Mammary epithelial cell (primary cell): ENCODE measurements at regions of chr14 and their contacts with region 1.

Region 1: DNA sequence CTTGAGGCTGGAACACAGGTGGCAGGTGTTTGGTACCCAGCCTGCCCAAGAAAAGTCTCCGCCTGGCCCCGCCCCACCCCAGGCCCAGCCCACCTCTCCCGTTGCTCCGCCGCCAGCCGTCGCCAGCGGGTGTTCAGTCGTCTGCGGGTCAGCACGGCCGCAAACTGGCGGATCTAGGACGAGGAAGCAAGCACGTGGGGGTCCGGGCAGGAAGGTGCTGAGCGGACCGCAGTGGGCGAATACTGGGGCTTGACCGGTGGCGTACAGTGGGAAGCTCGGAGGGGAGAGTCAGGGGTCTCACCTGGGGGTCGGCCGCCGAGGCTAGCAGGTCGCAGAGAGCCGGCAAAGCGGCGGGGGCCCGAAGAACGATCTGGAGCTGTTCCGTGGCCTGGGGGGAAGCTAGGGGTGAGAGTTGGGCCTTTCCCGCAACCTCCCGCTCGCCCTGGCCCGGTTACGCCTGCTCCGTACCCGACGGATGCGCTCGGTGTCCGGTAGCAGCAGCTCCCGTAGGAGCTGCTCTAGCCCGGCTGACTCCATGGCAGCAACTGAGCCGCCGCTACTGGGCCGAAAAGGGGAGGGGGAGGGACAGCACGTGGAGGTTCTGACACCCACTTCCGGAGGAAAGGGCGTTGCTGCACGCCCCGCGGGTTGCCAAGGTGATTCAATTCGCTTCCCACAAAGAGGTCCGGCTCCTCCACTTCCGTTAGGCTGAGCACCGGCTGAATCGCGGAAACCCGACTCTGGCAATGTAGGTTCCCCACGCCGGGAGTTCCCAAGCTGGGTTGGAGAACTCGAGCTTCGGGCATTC is at the start of gene IPO4:
- DNase-seq: peak; percentile 94
- H3K4me3 ChIP-seq: peak within 1 kb of the TSS; percentile 87 to 95 (median 89)
- H3K27ac ChIP-seq: peak within 1 kb of the TSS; percentile 63
- H3K4me1 ChIP-seq: peaks cover 14% of the 10 kb centered on the region
- H3K27me3 ChIP-seq: no peaks in the 10 kb centered on the region
- CTCF ChIP-seq: no peak
- total RNA-seq, gene IPO4: 44.2 to 60.2 TPM

Region 2: GRCh38 chr14:23578560-23579310 is 609.7 kb before region 1 on chr14 and contains the start of gene JPH4:
- CTCF ChIA-PET with region 1: no interaction called
- dilution Hi-C with region 1: no loop called
- in situ Hi-C with region 1: no loop called
- intact Hi-C with region 1: no loop called
- DNase-seq: no peak
- H3K4me3 ChIP-seq: no peak within 1 kb of the TSS
- H3K27ac ChIP-seq: no peak within 1 kb of the TSS
- H3K4me1 ChIP-seq: peaks cover 3% of the 10 kb centered on the region
- H3K27me3 ChIP-seq: peaks cover 32% of the 10 kb centered on the region
- CTCF ChIP-seq: no peak
- total RNA-seq, gene JPH4: 0.16 TPM in 1 of 2 donors, not detected in the other

Region 3: DNA sequence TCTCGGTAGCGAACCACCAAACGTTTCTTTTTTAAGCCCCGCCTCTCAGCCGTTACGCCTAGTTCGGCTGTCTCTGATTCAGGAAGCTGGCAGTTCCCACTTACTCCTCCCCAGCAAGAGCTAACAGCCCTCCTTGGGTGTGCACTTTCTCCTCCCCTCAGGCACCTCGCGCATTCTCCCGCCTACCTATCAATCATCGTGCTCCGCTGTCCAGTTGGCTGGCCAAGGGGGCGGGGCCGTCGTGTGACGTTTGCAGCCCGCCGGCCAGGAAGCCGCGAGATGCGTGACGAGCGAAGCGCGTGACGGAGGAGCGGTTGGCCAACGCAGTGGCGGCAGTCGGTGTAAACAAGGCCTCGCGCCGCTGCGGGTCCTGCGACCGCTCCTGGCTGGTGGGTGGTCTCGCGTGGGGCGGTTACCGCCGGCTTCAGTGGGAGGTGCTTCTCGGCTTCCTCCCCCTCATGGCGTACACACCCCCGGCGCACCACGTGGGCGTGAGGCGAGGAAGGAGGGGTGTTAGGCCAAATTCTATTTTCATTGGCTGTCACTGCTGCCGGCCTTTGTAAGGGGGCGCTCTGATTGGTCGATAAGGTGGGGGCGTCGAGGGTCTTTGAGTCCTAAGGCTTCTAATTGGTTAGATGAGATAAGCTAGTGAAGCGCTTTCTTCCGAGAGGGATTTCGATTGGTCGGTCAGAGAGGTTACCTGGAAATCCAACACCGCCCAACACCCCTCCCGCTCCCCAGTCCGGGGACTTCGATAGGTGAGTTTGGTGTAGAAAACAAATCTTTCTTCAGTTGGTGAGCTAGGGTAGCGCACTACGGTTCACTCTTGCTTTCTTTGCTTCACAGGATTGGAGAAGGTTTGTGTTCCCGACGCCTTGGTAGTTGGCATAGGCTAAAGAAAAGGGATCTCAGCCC is 73.7 kb before region 1 on chr14 and contains the starts of genes DCAF11 and NRL:
- CTCF ChIA-PET with region 1: no interaction called
- dilution Hi-C with region 1: no loop called
- in situ Hi-C with region 1: no loop called
- intact Hi-C with region 1: loop called (anchors 2 kb)
- DNase-seq: peak; percentile 100
- H3K4me3 ChIP-seq: peak within 1 kb of the TSS; percentile 63 to 96 (median 74)
- H3K27ac ChIP-seq: peak within 1 kb of the TSS; percentile 91
- H3K4me1 ChIP-seq: peaks cover 16% of the 10 kb centered on the region
- H3K27me3 ChIP-seq: no peaks in the 10 kb centered on the region
- CTCF ChIP-seq: no peak
- total RNA-seq, gene DCAF11: 38.4 to 55.7 TPM
- total RNA-seq, gene NRL: 1.1 to 1.5 TPM

Region 4: DNA sequence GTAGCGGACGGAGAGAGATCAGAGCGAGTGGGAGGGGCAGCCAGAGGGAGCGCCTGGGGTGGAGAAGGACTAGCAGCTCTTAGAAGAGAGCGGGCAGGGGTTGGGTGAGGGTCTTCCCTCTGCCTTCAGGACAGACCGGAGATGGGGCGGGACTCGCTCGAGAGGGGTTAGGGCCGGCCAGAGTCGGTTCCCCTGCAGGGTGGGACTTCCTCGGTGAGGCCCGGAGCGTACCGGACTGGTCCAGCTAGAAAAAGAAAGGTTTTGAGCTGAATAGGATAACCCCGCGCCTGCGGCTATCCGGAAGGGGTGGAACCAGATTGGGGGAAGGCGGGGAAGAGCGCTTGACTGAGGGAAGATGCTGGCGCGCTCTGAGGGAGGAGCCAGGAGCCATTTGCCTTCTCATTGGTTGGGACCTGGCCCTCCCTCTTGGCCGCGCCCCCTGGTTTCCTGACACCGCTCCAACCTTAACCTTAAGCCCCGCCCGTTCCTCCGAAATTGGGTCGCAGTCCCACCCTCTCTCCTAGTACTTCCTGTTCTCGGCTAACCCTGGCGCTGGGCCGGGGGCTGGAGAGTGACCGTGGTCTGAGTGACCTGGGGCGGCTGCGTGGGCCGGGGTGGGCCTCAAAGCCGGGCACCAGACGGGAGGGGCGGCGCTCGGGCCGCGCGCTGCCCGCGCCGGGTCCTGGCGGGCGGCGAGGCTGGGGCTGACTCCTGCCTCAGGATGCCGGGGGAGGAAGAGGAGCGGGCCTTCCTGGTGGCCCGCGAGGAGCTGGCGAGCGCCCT is 41.3 kb before region 1 on chr14 and contains the start of gene RNF31:
- CTCF ChIA-PET with region 1: no interaction called
- dilution Hi-C with region 1: no loop called
- in situ Hi-C with region 1: no loop called
- intact Hi-C with region 1: loop called (anchors 1 kb)
- DNase-seq: peak; percentile 98
- H3K4me3 ChIP-seq: peak within 1 kb of the TSS; percentile 75 to 93 (median 90)
- H3K27ac ChIP-seq: peak within 1 kb of the TSS; percentile 80
- H3K4me1 ChIP-seq: peaks cover 15% of the 10 kb centered on the region
- H3K27me3 ChIP-seq: no peaks in the 10 kb centered on the region
- CTCF ChIP-seq: no peak
- total RNA-seq, gene RNF31: 35.3 to 52.1 TPM

Region 5: GRCh38 chr14:24160850-24161804 is 27.3 kb before region 1 on chr14 and contains the start of gene IRF9:
- CTCF ChIA-PET with region 1: interaction called, 6 read pairs
- dilution Hi-C with region 1: no loop called
- in situ Hi-C with region 1: no loop called
- intact Hi-C with region 1: loop called (anchors 1 kb)
- DNase-seq: peak; percentile 83
- H3K4me3 ChIP-seq: peak within 1 kb of the TSS; percentile 58 to 67 (median 58)
- H3K27ac ChIP-seq: peak within 1 kb of the TSS; percentile 46
- H3K4me1 ChIP-seq: peaks cover 9% of the 10 kb centered on the region
- H3K27me3 ChIP-seq: no peaks in the 10 kb centered on the region
- CTCF ChIP-seq: peak; percentile 93 to 98
- total RNA-seq, gene IRF9: 43.0 to 45.7 TPM

Region 6: DNA sequence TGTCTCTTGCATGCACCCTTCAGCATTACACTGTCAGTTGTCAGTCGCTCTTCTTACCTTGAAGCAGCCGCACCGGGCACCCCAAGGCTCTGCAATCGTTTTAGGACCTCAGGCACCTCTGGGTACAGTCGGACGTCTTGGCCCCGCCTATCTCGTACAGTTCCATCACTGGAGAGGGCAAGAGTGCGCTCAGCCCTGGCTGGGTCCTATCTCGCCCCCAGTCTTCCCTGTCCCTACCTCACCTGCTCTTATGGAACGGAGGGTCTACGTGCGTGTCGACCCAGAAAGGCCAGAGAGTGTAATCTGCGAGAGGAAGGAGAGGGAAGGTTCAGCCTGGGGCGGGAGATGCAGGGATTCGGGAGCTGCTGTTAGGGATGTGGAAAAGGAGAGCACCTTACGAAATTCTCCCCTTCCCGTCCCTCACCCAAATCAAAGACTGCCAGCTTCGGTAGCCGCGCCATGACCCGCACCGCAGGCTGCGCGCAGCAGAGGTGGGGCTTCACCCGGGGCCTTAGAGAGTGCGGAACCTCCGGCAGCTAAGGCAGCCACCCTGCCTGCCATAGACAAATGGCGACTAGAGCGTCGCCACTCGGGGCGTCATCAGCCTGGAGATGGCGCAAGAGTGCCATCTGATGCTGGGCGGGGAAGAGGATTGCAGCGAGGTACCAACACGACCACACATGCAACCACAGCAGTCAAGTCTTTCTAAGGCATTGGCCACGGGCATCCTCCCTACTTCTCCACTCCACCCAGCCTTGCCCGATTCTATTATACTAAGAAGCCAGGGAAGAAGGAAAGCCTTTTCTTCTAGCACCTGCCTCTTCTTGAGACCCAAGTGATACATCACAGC is 27.3 kb after region 1 on chr14 and contains the start of gene MDP1:
- CTCF ChIA-PET with region 1: no interaction called
- dilution Hi-C with region 1: no loop called
- in situ Hi-C with region 1: no loop called
- intact Hi-C with region 1: loop called (anchors 2 kb)
- DNase-seq: peak; percentile 83
- H3K4me3 ChIP-seq: peak within 1 kb of the TSS; percentile 34 to 86 (median 46)
- H3K27ac ChIP-seq: peak within 1 kb of the TSS; percentile 42
- H3K4me1 ChIP-seq: peaks cover 14% of the 10 kb centered on the region
- H3K27me3 ChIP-seq: no peaks in the 10 kb centered on the region
- CTCF ChIP-seq: peak; percentile 39 to 60
- total RNA-seq, gene MDP1: 6.5 to 12.0 TPM

Region 7: GRCh38 chr14:24232121-24232644 is 43.7 kb after region 1 on chr14 and contains the start of gene NEDD8:
- CTCF ChIA-PET with region 1: no interaction called
- dilution Hi-C with region 1: no loop called
- in situ Hi-C with region 1: no loop called
- intact Hi-C with region 1: loop called (anchors 2 kb)
- DNase-seq: peak; percentile 99
- H3K4me3 ChIP-seq: peak within 1 kb of the TSS; percentile 52 to 67 (median 65)
- H3K27ac ChIP-seq: peak within 1 kb of the TSS; percentile 95
- H3K4me1 ChIP-seq: peaks cover 13% of the 10 kb centered on the region
- H3K27me3 ChIP-seq: no peaks in the 10 kb centered on the region
- CTCF ChIP-seq: no peak
- total RNA-seq, gene NEDD8: 66.2 to 274 TPM